ENCODE measurements at regions of chrX and their contacts with region 1.

Region 1: GRCh38 chrX:21438792-21439191 is 64.6 kb downstream of the CNKSR2 start:
- DNase-seq: peak in 3 of 14 experiments; percentile 26 to 54 (median 35)
- ATAC-seq: peak; percentile 94
- H3K4me3 ChIP-seq: peak overlapping the region; percentile 24
- H3K4me3 Mint-ChIP-seq: peak overlapping the region; percentile 76
- H3K27ac ChIP-seq: peak overlapping the region in 1 of 2 donors; percentile 68
- H3K27ac Mint-ChIP-seq: peak overlapping the region; percentile 88
- H3K4me1 ChIP-seq: no peaks in the 10 kb centered on the region
- H3K4me1 Mint-ChIP-seq: peaks cover 32% of the 10 kb centered on the region
- H3K27me3 ChIP-seq: no peaks in the 10 kb centered on the region
- H3K27me3 Mint-ChIP-seq: no peaks in the 10 kb centered on the region
- CTCF ChIP-seq: no peak

Region 2: DNA sequence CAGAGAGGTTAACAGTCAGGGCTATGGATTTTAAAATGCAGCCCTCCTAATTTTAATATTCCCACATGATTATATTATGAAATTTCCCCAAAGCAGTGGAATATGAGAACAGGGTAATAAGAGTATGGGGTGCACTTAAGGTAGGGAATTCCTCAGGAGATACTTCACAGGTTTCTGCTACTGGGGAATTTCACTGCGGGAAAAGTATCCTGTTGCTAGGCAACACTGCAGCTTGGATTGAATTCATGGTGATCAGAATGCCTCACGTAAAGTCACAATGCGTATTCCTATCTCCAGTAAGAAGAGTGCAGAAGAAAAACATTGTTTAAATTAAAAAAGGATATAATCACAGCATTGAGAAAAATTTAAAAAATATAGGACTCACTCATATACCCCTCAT is 774.0 kb before region 1 on chrX:
- CTCF ChIA-PET with region 1: no interaction called
- POLR2A ChIA-PET with region 1: no interaction called
- intact Hi-C with region 1: no loop called
- DNase-seq: no peak
- ATAC-seq: no peak
- H3K4me3 ChIP-seq: no peak overlapping the region
- H3K4me3 Mint-ChIP-seq: no peak overlapping the region
- H3K27ac ChIP-seq: no peak overlapping the region
- H3K27ac Mint-ChIP-seq: no peak overlapping the region
- H3K4me1 ChIP-seq: no peaks in the 10 kb centered on the region
- H3K4me1 Mint-ChIP-seq: no peaks in the 10 kb centered on the region
- H3K27me3 ChIP-seq: no peaks in the 10 kb centered on the region
- H3K27me3 Mint-ChIP-seq: peaks cover 5% of the 10 kb centered on the region
- CTCF ChIP-seq: no peak

Region 3: DNA sequence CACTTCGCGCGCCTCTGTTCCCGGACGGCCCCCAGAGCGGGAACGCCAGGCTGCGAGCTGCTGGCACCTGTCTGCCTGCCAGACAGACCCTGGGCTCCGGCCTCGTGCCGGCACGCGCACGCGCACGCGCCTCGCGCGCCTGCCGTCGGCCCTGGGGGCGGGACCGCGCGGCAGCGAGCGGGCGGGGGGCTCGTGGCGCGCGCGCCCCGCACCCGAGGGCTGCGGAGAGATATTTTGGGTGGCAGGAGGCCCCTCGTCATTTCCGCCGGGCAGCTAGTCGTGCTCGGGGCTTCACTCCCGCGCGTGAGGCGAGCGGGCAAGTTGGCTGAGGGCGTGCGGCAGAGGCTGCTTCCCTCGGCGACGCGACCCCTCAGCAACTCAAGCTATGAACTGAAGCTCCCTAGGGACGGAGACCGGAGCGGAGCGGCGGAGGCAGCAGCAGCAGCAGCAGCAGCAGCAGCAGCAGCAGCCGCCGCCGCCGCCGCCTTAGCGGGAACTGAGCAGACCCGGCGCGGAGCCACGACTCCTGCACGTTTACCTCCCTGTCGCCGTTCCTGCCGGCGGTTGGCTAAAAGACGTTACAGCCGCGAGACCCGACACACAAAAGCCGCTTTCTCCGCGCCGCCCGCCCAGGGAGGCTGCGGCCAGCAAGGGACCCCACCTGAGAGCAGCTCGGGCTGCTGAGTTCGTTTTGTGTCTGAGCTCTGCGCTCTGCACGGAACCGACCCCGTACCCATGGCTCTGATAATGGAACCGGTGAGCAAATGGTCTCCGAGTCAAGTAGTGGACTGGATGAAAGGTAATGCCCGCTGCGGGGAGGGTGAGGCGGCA is 64.4 kb before region 1 on chrX and contains the start of gene CNKSR2:
- CTCF ChIA-PET with region 1: no interaction called
- POLR2A ChIA-PET with region 1: interaction called, 21 read pairs
- intact Hi-C with region 1: loop called (anchors 2 to 5 kb)
- DNase-seq: peak; percentile 37 to 81 (median 64)
- ATAC-seq: peak; percentile 68
- H3K4me3 ChIP-seq: peak within 1 kb of the TSS; percentile 73
- H3K4me3 Mint-ChIP-seq: peak within 1 kb of the TSS; percentile 93
- H3K27ac ChIP-seq: peak within 1 kb of the TSS in 1 of 2 donors; percentile 35
- H3K27ac Mint-ChIP-seq: peak within 1 kb of the TSS; percentile 82
- H3K4me1 ChIP-seq: peaks cover 6% of the 10 kb centered on the region
- H3K4me1 Mint-ChIP-seq: peaks cover 41% of the 10 kb centered on the region
- H3K27me3 ChIP-seq: no peaks in the 10 kb centered on the region
- H3K27me3 Mint-ChIP-seq: no peaks in the 10 kb centered on the region
- CTCF ChIP-seq: no peak
- total RNA-seq, gene CNKSR2: 14.4 to 14.8 TPM